Activated B cell treated with CpG ODN at 0.5 μM for 24 hours (primary cell): ENCODE measurements at regions of chr3 and their contacts with region 1.

Region 1: GRCh38 chr3:188584162-188584529 is 430.2 kb downstream of the LPP start:
- DNase-seq: no peak
- ATAC-seq: peak; percentile 8
- H3K4me3 Mint-ChIP-seq: no peak overlapping the region
- H3K27ac Mint-ChIP-seq: no peak overlapping the region
- H3K4me1 Mint-ChIP-seq: peaks cover 31% of the 10 kb centered on the region
- H3K27me3 Mint-ChIP-seq: no peaks in the 10 kb centered on the region
- CTCF ChIP-seq: no peak

Region 2: DNA sequence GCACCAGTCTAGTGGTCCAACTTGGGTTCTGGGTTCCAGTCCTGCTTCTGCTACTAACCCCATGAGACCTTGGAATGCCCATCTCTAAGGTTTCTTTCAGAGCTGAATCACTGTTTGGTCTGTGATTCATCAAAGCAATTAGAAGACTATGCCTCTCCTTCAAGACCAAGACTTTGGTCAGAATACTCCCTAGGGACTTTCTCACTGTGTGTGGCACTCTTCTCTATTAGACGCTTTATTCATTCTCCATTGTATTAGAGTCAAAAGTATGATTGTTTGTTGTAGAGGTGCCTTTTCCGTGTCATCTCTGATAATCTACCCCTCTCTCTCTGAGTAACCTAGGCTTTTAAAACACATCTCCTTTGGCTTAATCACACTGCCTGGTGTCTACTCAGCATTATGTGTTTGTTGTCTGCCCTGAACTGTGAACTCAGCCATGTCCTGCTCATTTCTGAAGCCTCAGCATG is 339.7 kb before region 1 on chr3:
- CTCF ChIA-PET with region 1: no interaction called
- POLR2A ChIA-PET with region 1: no interaction called
- intact Hi-C with region 1: loop called (anchors 5 kb)
- DNase-seq: no peak
- ATAC-seq: peak; percentile 78
- H3K4me3 Mint-ChIP-seq: peak overlapping the region; percentile 24
- H3K27ac Mint-ChIP-seq: peak overlapping the region; percentile 62
- H3K4me1 Mint-ChIP-seq: peaks cover 74% of the 10 kb centered on the region
- H3K27me3 Mint-ChIP-seq: no peaks in the 10 kb centered on the region
- CTCF ChIP-seq: no peak

Region 3: GRCh38 chr3:188389711-188390342 is 194.3 kb before region 1 on chr3:
- CTCF ChIA-PET with region 1: interaction called, 4 read pairs
- POLR2A ChIA-PET with region 1: interaction called, 14 read pairs
- intact Hi-C with region 1: no loop called
- DNase-seq: peak; percentile 29
- ATAC-seq: peak; percentile 84
- H3K4me3 Mint-ChIP-seq: peak overlapping the region; percentile 65
- H3K27ac Mint-ChIP-seq: peak overlapping the region; percentile 98
- H3K4me1 Mint-ChIP-seq: peaks cover 87% of the 10 kb centered on the region
- H3K27me3 Mint-ChIP-seq: no peaks in the 10 kb centered on the region
- CTCF ChIP-seq: no peak

Region 4: DNA sequence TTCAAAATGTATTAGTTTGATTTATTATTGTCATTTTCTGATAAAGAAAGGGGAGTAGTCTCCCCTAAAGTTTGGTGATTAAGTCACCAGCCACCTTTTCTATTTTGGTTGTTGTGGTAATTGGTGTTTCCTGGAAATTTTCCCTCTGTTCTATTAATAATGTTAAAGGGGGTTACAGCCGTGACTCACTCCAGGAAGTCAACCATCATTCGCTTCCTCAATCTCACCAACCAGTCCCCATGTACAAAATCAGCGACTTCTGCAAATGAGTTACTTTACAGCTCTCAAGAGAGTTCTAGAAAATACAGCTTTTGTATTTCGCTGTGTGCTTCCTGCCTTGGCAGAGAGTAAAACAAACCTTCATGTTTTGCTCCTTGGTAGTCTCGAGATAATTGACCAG is 145.1 kb before region 1 on chr3:
- CTCF ChIA-PET with region 1: no interaction called
- POLR2A ChIA-PET with region 1: interaction called, 15 read pairs
- intact Hi-C with region 1: loop called (anchors 2 kb)
- DNase-seq: no peak
- ATAC-seq: peak; percentile 85
- H3K4me3 Mint-ChIP-seq: peak overlapping the region; percentile 52
- H3K27ac Mint-ChIP-seq: peak overlapping the region; percentile 88
- H3K4me1 Mint-ChIP-seq: peaks cover 95% of the 10 kb centered on the region
- H3K27me3 Mint-ChIP-seq: no peaks in the 10 kb centered on the region
- CTCF ChIP-seq: no peak

Region 5: DNA sequence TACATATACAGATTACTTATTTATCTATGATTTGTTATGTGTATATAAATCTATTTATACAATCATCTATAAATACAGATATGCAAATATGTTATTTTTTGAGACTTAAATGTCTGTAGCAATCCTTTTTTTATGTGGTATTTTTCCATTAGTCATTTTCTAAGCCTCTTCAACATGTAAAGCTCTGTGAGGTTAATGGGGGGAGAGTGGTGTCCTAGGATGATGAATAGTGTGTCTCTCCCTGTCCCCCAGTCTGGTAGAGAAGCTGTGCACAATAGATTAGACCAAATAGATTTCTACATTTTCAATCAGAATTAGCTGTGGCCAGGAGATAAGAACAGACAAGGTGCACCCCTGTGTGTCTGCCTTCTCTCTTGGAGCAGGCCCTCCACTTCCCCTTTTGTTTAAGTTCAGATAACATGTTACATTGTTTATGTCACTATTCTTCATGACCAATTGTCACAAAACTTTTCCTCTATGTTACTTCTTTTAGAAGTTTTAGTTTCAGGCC is 23.7 kb after region 1 on chr3:
- CTCF ChIA-PET with region 1: no interaction called
- POLR2A ChIA-PET with region 1: interaction called, 4 read pairs
- intact Hi-C with region 1: loop called (anchors 2 kb)
- DNase-seq: no peak
- ATAC-seq: no peak
- H3K4me3 Mint-ChIP-seq: no peak overlapping the region
- H3K27ac Mint-ChIP-seq: peak overlapping the region; percentile 59
- H3K4me1 Mint-ChIP-seq: peaks cover 22% of the 10 kb centered on the region
- H3K27me3 Mint-ChIP-seq: no peaks in the 10 kb centered on the region
- CTCF ChIP-seq: no peak

Region 6: DNA sequence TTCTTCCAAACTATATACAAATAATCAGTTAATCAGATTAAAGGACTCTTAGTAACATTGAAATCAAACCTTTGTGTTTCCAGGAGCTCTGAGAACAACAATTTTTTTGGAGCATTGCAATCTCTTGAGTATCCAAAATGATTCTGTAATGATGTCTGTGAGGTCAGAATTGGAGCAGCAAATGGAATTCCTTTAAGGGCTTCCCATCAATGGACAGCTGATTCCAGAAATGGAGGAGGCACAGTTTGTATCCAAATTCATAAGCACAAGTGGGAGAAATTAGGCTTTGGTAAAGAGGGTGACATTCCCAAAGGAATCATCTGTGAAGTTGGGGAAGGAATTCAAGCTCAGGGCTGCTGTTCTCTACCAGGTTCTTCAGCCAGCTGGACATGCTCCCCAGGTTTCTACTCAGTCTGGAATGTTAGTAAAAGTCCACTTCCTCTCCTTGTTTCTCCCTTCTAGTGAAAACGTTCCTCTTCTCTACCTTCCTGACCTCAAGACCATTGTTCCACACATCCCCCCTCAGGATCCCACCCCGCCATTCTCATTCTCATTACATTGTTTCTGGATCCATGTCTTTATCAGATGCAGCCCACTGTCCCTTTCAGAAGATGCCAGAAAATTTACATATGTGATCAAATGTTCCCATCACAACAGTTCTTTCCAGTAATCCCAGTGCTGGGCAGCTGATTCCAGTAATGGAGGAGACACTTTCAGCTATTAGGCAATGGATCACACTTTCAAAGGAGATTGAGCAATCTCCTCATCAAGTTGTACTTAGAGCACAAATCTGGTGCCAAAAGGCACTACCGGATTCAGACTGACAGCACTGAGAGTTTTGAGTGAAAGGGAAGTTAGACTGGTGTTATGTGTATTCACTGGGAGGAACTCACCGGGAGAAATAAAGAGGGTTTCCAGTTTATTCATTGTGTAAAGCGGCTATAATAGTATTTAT is 196.3 kb after region 1 on chr3:
- CTCF ChIA-PET with region 1: no interaction called
- POLR2A ChIA-PET with region 1: interaction called, 10 read pairs
- intact Hi-C with region 1: no loop called
- DNase-seq: no peak
- ATAC-seq: no peak
- H3K4me3 Mint-ChIP-seq: no peak overlapping the region
- H3K27ac Mint-ChIP-seq: no peak overlapping the region
- H3K4me1 Mint-ChIP-seq: peaks cover 4% of the 10 kb centered on the region
- H3K27me3 Mint-ChIP-seq: no peaks in the 10 kb centered on the region
- CTCF ChIP-seq: no peak

Region 7: DNA sequence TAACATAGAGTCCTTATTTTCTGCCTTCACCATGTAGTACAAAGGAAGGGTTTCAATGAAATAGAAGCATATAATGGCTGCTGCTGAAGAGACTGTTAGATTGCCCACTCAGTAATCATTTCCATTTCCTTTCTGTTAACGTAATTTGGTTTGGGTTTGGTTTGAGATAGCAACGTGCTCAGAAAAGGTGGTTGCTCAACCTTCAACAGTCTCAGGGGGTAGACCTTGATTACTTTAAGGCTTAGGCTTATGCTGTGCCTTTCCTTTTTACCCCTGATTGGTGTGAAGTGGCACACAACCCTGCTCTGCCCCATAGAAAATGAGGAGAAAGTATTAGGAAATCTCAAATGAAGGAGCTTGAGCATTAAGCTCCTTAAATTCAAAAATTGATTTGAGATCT is 883.3 kb after region 1 on chr3:
- CTCF ChIA-PET with region 1: no interaction called
- POLR2A ChIA-PET with region 1: no interaction called
- intact Hi-C with region 1: no loop called
- DNase-seq: no peak
- ATAC-seq: no peak
- H3K4me3 Mint-ChIP-seq: no peak overlapping the region
- H3K27ac Mint-ChIP-seq: no peak overlapping the region
- H3K4me1 Mint-ChIP-seq: peaks cover 10% of the 10 kb centered on the region
- H3K27me3 Mint-ChIP-seq: no peaks in the 10 kb centered on the region
- CTCF ChIP-seq: no peak